GM10248 (cell line): ENCODE measurements at regions of chr5 and their contacts with region 1.

Region 1: GRCh38 chr5:99032234-99033013 is 103.6 kb upstream of the CHD1 start:
- DNase-seq: peak; percentile 36
- CTCF ChIP-seq: peak; percentile 70

Region 2: GRCh38 chr5:98905857-98906690 is 126.3 kb before region 1 on chr5:
- CTCF ChIA-PET with region 1: interaction called, 20 read pairs
- POLR2A ChIA-PET with region 1: no interaction called
- DNase-seq: peak; percentile 19
- CTCF ChIP-seq: peak; percentile 66

Region 3: GRCh38 chr5:99590861-99591260 is 558.4 kb after region 1 on chr5:
- CTCF ChIA-PET with region 1: no interaction called
- POLR2A ChIA-PET with region 1: no interaction called
- DNase-seq: no peak
- CTCF ChIP-seq: no peak

Region 4: GRCh38 chr5:99929806-99930135 is 897.3 kb after region 1 on chr5:
- CTCF ChIA-PET with region 1: no interaction called
- POLR2A ChIA-PET with region 1: no interaction called
- DNase-seq: no peak
- CTCF ChIP-seq: no peak